Caco-2 (cell line): ENCODE measurements at regions of chr2 and their contacts with region 1.

Region 1: DNA sequence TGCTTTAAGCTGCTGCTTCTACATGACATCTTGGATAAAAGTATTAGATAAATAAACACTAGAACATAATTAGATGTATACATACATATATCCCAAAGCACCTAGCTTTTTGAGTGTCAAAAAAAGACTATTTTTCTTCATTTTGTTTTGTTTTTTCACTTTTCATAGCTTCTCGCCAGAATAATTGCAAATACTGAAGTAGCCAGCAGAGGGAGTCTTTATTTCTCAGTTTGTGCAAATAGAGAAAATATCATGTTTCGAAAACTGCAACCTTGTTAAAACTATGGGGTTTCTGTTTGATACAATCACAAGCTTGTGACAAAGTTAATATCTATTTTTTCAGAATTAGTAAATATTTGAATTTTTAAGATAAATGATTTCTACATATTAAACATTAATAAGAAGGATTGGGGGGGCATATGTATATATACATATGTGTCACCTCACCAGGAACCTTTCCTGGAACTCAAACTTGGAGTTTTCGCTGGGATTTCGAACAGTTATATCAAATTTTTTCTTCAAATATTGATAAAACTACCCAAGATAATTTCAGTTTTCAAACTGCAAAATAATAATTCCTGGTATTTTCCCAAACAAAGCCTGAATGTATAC is 61.0 kb downstream of the GRB14 start:
- DNase-seq: peak in 1 of 2 experiments; percentile 47
- H3K4me3 ChIP-seq: no peak overlapping the region
- H3K4me3 Mint-ChIP-seq: no peak overlapping the region
- H3K27ac Mint-ChIP-seq: no peak overlapping the region
- H3K4me1 ChIP-seq: 0 out of 2 replicates have a peak, but pooled peaks cover 4% of the 10 kb centered on the region
- H3K4me1 Mint-ChIP-seq: peaks cover 2% of the 10 kb centered on the region
- H3K27me3 ChIP-seq: no peaks in the 10 kb centered on the region
- H3K27me3 Mint-ChIP-seq: no peaks in the 10 kb centered on the region
- CTCF ChIP-seq: peak; percentile 74 to 76

Region 2: DNA sequence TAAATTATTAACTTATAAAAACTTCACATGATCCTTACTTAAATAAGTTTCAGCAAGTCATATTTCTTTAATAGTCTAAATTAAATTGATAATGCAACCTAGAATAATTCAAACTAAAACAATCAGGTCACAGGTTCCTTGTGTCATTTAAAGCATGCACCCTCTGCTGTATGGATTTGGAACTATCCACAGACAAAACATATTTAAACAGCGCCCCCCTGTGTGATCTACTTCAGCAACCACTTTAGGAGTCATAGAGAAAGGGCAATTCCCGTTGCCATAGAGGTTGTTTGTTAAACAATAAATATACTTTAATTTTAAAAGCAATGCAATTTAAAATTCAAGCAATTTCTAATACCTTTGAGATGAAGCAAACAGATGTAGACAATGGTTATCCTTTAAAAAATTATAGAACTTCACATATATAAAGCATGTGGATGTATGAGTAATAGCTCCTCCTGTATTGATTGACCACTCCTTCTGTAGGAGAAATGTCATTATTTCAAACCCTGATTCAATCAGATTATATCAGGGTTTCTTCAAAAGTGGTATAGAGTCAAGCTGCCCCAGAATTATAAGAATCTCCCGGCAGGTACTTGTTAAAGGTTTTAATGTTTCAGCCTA is 39.8 kb after region 1 on chr2:
- CTCF ChIA-PET with region 1: interaction called, 17 read pairs
- POLR2A ChIA-PET with region 1: no interaction called
- intact Hi-C with region 1: loop called (anchors 1 kb)
- DNase-seq: peak; percentile 60 to 80
- H3K4me3 ChIP-seq: no peak overlapping the region
- H3K4me3 Mint-ChIP-seq: no peak overlapping the region
- H3K27ac Mint-ChIP-seq: no peak overlapping the region
- H3K4me1 ChIP-seq: no peaks in the 10 kb centered on the region
- H3K4me1 Mint-ChIP-seq: no peaks in the 10 kb centered on the region
- H3K27me3 ChIP-seq: no peaks in the 10 kb centered on the region
- H3K27me3 Mint-ChIP-seq: no peaks in the 10 kb centered on the region
- CTCF ChIP-seq: peak; percentile 92 to 95

Region 3: GRCh38 chr2:164655748-164656147 is 95.5 kb after region 1 on chr2:
- CTCF ChIA-PET with region 1: no interaction called
- POLR2A ChIA-PET with region 1: no interaction called
- intact Hi-C with region 1: loop called (anchors 1 kb)
- DNase-seq: no peak
- H3K4me3 ChIP-seq: no peak overlapping the region
- H3K4me3 Mint-ChIP-seq: no peak overlapping the region
- H3K27ac Mint-ChIP-seq: no peak overlapping the region
- H3K4me1 ChIP-seq: no peaks in the 10 kb centered on the region
- H3K4me1 Mint-ChIP-seq: no peaks in the 10 kb centered on the region
- H3K27me3 ChIP-seq: no peaks in the 10 kb centered on the region
- H3K27me3 Mint-ChIP-seq: no peaks in the 10 kb centered on the region
- CTCF ChIP-seq: no peak

Region 4: GRCh38 chr2:164706522-164706921 is 146.2 kb after region 1 on chr2:
- CTCF ChIA-PET with region 1: no interaction called
- POLR2A ChIA-PET with region 1: no interaction called
- intact Hi-C with region 1: no loop called
- DNase-seq: no peak
- H3K4me3 ChIP-seq: no peak overlapping the region
- H3K4me3 Mint-ChIP-seq: no peak overlapping the region
- H3K27ac Mint-ChIP-seq: peak overlapping the region; percentile 0
- H3K4me1 ChIP-seq: peaks cover 28% of the 10 kb centered on the region
- H3K4me1 Mint-ChIP-seq: peaks cover 19% of the 10 kb centered on the region
- H3K27me3 ChIP-seq: no peaks in the 10 kb centered on the region
- H3K27me3 Mint-ChIP-seq: no peaks in the 10 kb centered on the region
- CTCF ChIP-seq: no peak